Heart left ventricle (tissue), 16 donors: ENCODE measurements at regions of chr3 and their contacts with region 1.

Region 1: GRCh38 chr3:179768080-179768479 is 115.2 kb downstream of the USP13 start:
- DNase-seq: no peak
- ATAC-seq: no peak
- H3K4me3 ChIP-seq: no peak overlapping the region
- H3K27ac ChIP-seq: no peak overlapping the region
- H3K4me1 ChIP-seq: peaks cover 0 to 21% (median 0%) of the 10 kb centered on the region in 12 donors
- H3K27me3 ChIP-seq: no peaks in the 10 kb centered on the region
- CTCF ChIP-seq: peak in 7 of 12 donors; percentile 13 to 33 (median 22)
- POLR2A ChIP-seq: no peak

Region 2: GRCh38 chr3:179829401-179829800 is 61.3 kb after region 1 on chr3:
- intact Hi-C with region 1: loop called in 1 of 10 experiments (anchors 10 kb)
- DNase-seq: no peak
- ATAC-seq: no peak
- H3K4me3 ChIP-seq: no peak overlapping the region
- H3K27ac ChIP-seq: no peak overlapping the region
- H3K4me1 ChIP-seq: peaks cover 0 to 9% (median 0%) of the 10 kb centered on the region in 12 donors
- H3K27me3 ChIP-seq: no peaks in the 10 kb centered on the region
- CTCF ChIP-seq: no peak
- POLR2A ChIP-seq: no peak